Activated CD4-positive, alpha-beta T cell treated with anti-CD3 and anti-CD28 coated beads for 36 hours (primary cell): ENCODE measurements at regions of chr7 and their contacts with region 1.

Region 1: GRCh38 chr7:135274495-135275268 is 41.0 kb downstream of the STRA8 start:
- DNase-seq: peak; percentile 86
- ATAC-seq: peak; percentile 88
- H3K4me3 Mint-ChIP-seq: no peak overlapping the region
- H3K27ac Mint-ChIP-seq: no peak overlapping the region
- H3K4me1 Mint-ChIP-seq: no peaks in the 10 kb centered on the region
- H3K27me3 Mint-ChIP-seq: peaks cover 4% of the 10 kb centered on the region

Region 2: DNA sequence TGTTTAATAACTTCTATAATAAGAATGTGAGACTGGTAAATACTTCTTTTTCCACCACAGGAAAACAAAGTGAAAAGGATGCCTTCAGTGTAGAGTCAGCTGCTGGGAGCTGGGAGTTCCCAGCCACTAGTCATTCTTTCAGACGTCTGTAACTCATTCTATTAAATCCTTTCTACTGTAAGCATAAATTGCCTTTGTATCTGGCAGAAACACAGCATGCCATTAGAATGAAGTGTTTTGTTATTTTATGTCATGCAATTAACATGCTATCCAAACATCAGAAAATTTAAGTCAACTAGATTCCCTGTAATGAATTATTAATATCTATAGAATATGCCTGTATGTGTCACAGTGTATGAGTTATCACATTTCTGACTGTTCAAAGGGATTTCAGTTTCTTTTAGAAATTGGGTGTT is 613.7 kb before region 1 on chr7:
- CTCF ChIA-PET with region 1: no interaction called
- POLR2A ChIA-PET with region 1: no interaction called
- intact Hi-C with region 1: no loop called
- DNase-seq: no peak
- ATAC-seq: peak; percentile 73
- H3K4me3 Mint-ChIP-seq: no peak overlapping the region
- H3K27ac Mint-ChIP-seq: peak overlapping the region; percentile 71
- H3K4me1 Mint-ChIP-seq: peaks cover 42% of the 10 kb centered on the region
- H3K27me3 Mint-ChIP-seq: no peaks in the 10 kb centered on the region

Region 3: DNA sequence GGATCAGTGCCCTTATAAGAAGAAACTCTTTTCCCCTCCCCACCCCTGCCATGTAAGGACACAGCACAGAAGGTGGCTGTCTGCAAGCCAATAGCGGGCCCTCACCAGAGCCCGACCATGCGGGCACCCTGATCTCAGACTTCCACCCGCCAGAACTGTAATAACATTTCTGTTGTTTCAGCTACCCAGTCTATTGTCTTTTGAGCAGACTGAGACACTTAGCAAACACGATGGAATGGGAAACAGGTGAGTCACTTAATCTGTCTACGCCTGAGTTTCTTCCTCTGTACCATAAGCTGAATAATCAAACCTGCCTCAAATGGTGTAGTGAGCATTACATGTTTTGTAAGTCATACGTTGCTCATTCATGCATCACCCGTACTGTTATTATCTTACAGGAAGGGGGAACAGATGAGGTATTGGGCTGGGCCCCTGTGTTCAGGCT is 17.1 kb after region 1 on chr7:
- CTCF ChIA-PET with region 1: interaction called, 19 read pairs
- POLR2A ChIA-PET with region 1: no interaction called
- intact Hi-C with region 1: no loop called
- DNase-seq: peak; percentile 39
- ATAC-seq: peak; percentile 96
- H3K4me3 Mint-ChIP-seq: no peak overlapping the region
- H3K27ac Mint-ChIP-seq: no peak overlapping the region
- H3K4me1 Mint-ChIP-seq: peaks cover 7% of the 10 kb centered on the region
- H3K27me3 Mint-ChIP-seq: peaks cover 8% of the 10 kb centered on the region

Region 4: DNA sequence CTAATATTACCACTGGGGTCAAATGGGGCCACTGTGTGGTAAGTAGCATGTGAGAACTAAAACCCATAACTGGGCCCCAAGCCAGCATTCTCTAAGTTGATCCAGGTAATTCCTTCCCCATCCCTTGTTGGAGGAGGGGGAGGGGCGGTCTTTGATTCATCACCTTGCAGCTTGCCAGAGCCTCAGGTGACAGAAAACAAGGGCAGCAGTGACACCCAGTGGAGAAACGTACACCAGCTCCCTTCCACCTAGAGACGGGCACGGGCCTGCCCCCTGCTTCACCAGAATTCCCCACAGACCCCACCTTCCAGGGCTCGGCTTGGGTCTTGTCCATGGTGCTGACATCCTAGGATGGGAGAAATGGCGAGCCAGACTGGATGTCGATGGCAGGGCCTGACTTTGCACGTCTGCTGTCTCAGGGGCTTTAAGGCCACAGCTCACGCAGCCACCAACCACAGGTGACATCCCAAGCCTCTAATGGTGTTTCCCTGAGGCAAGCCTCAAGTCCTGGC is 61.0 kb after region 1 on chr7:
- CTCF ChIA-PET with region 1: interaction called, 81 read pairs
- POLR2A ChIA-PET with region 1: no interaction called
- intact Hi-C with region 1: no loop called
- DNase-seq: peak; percentile 73
- ATAC-seq: peak; percentile 79
- H3K4me3 Mint-ChIP-seq: no peak overlapping the region
- H3K27ac Mint-ChIP-seq: no peak overlapping the region
- H3K4me1 Mint-ChIP-seq: peaks cover 5% of the 10 kb centered on the region
- H3K27me3 Mint-ChIP-seq: no peaks in the 10 kb centered on the region

Region 5: DNA sequence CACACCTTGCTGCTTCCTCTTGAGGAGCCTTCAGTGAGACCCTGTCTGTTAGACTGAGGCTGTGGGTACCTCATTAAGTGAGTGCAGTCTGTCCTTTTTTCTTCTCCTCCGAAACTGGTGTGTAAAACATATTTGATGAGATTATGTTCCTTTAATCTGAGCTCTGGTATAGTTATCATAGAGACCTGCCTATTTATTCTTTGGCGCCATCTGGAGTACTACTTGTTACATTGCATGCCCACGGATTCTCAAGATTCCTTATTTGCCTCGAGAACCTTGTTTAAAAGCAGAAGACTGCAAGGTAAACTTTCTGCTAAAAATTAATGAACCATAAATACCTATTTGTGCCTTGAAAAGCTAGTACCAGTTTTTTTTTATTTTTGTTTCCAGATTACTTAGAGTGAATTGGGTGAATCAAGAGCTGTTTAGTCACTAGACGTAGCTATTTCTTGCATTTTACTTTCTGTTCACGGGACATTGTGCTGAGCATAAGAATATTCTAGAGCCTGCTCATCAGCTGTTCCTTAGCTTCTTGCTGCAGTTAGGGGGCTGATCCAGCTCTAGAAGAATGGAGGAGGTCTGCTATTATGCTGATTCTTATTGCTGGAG is 370.7 kb after region 1 on chr7:
- CTCF ChIA-PET with region 1: interaction called, 37 read pairs
- POLR2A ChIA-PET with region 1: no interaction called
- intact Hi-C with region 1: loop called in 1 of 2 experiments (anchors 1 kb)
- DNase-seq: no peak
- ATAC-seq: peak; percentile 58
- H3K4me3 Mint-ChIP-seq: no peak overlapping the region
- H3K27ac Mint-ChIP-seq: no peak overlapping the region
- H3K4me1 Mint-ChIP-seq: no peaks in the 10 kb centered on the region
- H3K27me3 Mint-ChIP-seq: no peaks in the 10 kb centered on the region

Region 6: GRCh38 chr7:136009488-136010079 is 734.9 kb after region 1 on chr7:
- CTCF ChIA-PET with region 1: interaction called, 3 read pairs
- POLR2A ChIA-PET with region 1: no interaction called
- intact Hi-C with region 1: loop called in 1 of 2 experiments (anchors 2 kb)
- DNase-seq: no peak
- ATAC-seq: no peak
- H3K4me3 Mint-ChIP-seq: no peak overlapping the region
- H3K27ac Mint-ChIP-seq: no peak overlapping the region
- H3K4me1 Mint-ChIP-seq: peaks cover 4% of the 10 kb centered on the region
- H3K27me3 Mint-ChIP-seq: peaks cover 8% of the 10 kb centered on the region